ENCODE measurements at regions of chr11 and their contacts with region 1.

Region 1: DNA sequence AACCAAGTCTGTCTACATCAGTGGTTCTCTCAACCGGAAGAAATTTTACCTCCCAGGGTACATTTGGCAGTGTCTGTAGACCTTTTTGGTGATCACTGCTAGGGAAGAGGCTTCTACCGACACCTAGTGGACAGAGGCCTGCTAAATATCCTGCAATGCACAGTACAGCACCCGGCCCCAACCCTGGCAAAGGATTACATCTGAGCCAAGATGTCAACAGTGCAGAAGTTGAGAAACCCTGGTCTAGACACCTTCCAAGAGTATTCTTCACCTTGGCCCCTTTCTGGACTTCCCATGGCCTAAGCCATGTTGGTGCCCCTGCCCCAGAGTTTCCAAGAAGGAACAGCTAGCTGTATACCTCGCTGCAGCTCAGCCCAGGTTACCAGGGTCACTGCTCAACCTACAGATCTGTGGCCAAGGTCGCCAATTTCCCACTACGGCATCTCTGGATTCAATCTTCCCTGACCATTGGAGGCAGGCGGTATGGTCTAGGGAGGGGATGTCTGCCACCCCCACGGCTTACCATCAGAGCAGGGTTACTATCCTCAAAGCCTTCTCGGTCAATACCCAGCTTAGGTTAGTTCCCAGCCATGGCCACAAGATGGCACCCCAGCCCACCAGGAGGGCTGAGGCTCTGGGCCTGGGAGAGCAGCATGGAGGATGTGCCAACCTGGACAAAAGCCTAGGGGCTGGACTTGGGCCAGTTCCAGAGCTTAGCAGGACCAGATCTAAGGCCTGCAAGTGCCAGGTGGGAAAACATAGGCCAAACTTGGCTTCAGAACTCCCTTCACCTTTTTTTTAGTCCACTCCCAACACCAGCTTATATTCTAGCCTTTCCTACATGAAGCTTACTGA is 3.7 kb upstream of the KCNC1 start:
- DNase-seq: peak; percentile 13 to 31 (median 30)
- H3K4me3 ChIP-seq: no peak overlapping the region
- H3K4me3 Mint-ChIP-seq: no peak overlapping the region
- H3K27ac ChIP-seq: no peak overlapping the region
- H3K27ac Mint-ChIP-seq: no peak overlapping the region
- H3K4me1 ChIP-seq: no peaks in the 10 kb centered on the region
- H3K4me1 Mint-ChIP-seq: no peaks in the 10 kb centered on the region
- H3K27me3 ChIP-seq: peaks cover 14 to 30% of the 10 kb centered on the region in 2 donors
- H3K27me3 Mint-ChIP-seq: peaks cover 32 to 47% (median 44%) of the 10 kb centered on the region in 3 donors
- CTCF ChIP-seq: peak; percentile 70

Region 2: DNA sequence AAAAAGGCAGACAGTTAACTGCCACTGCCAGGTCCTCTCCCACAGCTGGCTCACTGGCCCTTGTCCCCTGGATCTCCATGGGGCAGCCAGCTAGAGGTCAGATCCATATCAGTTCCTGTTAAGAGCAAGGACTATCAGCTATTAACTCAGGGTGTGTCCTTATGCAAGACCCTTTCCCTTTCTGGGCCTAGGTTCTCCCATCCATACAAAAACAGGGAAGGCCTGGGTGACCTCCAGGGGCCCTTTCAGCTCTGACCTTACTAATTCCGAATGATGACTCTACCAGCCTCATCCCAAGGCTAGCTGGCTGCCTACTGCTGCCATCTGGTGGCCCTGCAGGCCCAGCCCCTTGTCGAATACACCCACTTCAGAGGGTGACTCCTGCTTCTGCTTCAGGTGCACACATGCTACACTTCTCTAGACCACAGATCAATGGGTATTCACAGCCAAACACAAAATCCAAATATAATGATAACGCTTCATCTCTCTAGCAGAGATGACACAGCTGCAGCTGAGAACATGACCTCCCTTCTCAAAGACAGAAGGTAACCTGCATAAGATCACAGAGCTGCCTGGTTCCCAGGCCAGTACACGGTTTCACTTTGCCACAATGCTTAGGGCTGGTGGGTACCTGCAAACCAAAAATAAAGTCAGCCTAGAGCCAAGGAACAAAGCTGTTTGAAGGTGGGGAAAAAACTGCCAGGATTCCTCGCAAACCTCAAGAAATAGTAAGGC is 247.9 kb after region 1 on chr11:
- intact Hi-C with region 1: loop called (anchors 2 to 5 kb)
- DNase-seq: peak in 1 of 3 donors; percentile 3
- H3K4me3 ChIP-seq: no peak overlapping the region
- H3K4me3 Mint-ChIP-seq: no peak overlapping the region
- H3K27ac ChIP-seq: no peak overlapping the region
- H3K27ac Mint-ChIP-seq: no peak overlapping the region
- H3K4me1 ChIP-seq: no peaks in the 10 kb centered on the region
- H3K4me1 Mint-ChIP-seq: no peaks in the 10 kb centered on the region
- H3K27me3 ChIP-seq: no peaks in the 10 kb centered on the region
- H3K27me3 Mint-ChIP-seq: no peaks in the 10 kb centered on the region
- CTCF ChIP-seq: no peak